Caco-2 (cell line): ENCODE measurements at regions of chrX and their contacts with region 1.

Region 1: DNA sequence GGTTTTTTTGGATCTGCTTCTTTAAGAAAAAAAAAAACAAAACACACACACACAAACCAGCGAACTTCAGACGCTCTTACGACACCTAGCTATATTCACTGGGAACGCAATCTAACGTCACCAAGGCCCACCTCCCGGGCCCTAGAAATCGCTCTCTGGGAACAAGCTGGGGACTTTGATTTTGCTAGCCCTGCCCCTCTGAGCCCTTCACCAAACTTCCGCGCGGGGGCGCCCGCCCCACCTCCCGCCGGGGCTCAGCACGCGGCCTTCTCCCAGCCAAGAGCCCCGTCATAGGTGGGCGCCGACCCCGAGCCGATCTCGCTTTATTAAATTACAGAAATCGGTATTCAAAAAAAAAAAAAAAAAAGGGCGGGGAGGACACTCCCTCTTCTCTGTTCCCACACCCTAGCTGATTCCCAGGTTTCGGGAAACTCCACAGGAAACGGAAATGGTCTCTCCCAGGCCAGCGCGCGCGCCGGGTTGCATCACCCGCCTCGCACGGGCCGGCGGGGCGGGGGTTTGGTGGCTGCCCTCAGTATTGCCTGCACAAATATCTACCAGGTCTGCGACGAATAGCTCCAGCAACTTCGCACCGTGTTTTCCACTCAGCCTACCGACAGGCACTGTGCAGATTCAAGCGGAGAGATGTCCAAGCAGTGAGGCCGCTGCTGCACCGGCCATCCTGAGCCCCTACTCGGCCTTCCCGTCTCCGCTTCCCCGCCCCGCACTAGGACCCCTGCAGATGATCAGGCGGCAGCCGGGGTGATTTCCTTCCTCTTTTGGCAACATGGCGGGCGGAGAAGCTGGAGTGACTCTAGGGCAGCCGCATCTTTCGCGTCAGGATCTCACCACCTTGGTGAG is at the start of gene EIF2S3:
- DNase-seq: peak; percentile 89 to 91
- H3K4me3 ChIP-seq: peak within 1 kb of the TSS; percentile 28
- H3K4me3 Mint-ChIP-seq: no peak within 1 kb of the TSS
- H3K27ac Mint-ChIP-seq: no peak within 1 kb of the TSS
- H3K4me1 ChIP-seq: no peaks in the 10 kb centered on the region
- H3K4me1 Mint-ChIP-seq: no peaks in the 10 kb centered on the region
- H3K27me3 ChIP-seq: no peaks in the 10 kb centered on the region
- H3K27me3 Mint-ChIP-seq: no peaks in the 10 kb centered on the region
- CTCF ChIP-seq: peak; percentile 58 to 73
- total RNA-seq, gene EIF2S3: 240 and 270 TPM in 2 replicates

Region 2: GRCh38 chrX:24014388-24015018 is 39.9 kb before region 1 on chrX:
- CTCF ChIA-PET with region 1: no interaction called
- POLR2A ChIA-PET with region 1: no interaction called
- intact Hi-C with region 1: no loop called
- DNase-seq: no peak
- H3K4me3 ChIP-seq: no peak overlapping the region
- H3K4me3 Mint-ChIP-seq: no peak overlapping the region
- H3K27ac Mint-ChIP-seq: no peak overlapping the region
- H3K4me1 ChIP-seq: no peaks in the 10 kb centered on the region
- H3K4me1 Mint-ChIP-seq: no peaks in the 10 kb centered on the region
- H3K27me3 ChIP-seq: no peaks in the 10 kb centered on the region
- H3K27me3 Mint-ChIP-seq: no peaks in the 10 kb centered on the region
- CTCF ChIP-seq: no peak

Region 3: DNA sequence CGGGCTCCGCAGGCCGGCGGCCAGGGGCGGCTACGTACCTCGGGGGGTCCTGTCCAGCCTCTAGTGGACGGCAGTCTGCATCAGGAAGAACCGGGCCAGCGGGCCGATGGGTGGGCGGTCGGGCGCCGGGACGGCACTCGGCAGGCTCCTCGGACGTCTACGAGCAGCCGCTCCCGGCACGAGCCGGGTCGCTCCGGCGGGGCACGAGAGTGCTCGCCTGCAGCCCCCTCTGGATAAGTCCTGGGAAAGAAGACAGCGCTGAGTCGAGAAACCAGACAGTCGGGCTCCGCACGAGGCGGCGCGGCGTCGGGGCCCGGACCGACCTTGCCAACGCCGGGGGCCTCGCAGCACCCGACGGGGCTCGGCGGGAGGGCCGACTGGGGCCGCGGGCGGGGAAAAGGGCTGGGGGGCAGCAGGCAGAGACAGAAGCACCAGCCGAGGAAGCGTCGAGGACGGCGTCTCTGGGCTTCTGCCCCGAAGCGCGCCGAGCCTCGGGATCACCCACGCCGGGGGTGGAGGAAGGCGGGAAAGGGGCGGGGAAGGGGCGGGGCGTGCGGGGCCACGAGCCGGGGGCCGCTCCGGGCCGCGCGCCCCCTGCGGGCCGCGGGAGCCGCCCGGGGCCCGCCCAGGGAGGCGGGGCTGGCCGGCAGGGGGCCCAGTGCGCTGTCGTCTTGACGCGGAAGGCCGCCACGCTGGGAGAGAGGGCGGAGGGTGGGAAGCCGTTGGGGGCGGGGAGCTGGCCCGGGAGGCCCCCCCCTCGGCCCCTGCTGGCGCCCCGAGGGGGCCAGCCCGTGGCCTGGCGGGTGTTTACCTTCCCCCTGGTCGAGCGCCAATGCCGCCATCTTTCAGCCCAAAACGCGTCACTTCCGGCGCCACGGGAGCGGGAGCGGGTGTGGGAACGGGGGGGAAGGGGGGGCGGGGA is 29.3 kb before region 1 on chrX:
- CTCF ChIA-PET with region 1: interaction called, 31 read pairs
- POLR2A ChIA-PET with region 1: interaction called, 6 read pairs
- intact Hi-C with region 1: loop called (anchors 1 kb)
- DNase-seq: peak; percentile 90
- H3K4me3 ChIP-seq: peak overlapping the region; percentile 90
- H3K4me3 Mint-ChIP-seq: peak overlapping the region; percentile 80
- H3K27ac Mint-ChIP-seq: peak overlapping the region; percentile 93
- H3K4me1 ChIP-seq: no peaks in the 10 kb centered on the region
- H3K4me1 Mint-ChIP-seq: no peaks in the 10 kb centered on the region
- H3K27me3 ChIP-seq: no peaks in the 10 kb centered on the region
- H3K27me3 Mint-ChIP-seq: no peaks in the 10 kb centered on the region
- CTCF ChIP-seq: no peak

Region 4: DNA sequence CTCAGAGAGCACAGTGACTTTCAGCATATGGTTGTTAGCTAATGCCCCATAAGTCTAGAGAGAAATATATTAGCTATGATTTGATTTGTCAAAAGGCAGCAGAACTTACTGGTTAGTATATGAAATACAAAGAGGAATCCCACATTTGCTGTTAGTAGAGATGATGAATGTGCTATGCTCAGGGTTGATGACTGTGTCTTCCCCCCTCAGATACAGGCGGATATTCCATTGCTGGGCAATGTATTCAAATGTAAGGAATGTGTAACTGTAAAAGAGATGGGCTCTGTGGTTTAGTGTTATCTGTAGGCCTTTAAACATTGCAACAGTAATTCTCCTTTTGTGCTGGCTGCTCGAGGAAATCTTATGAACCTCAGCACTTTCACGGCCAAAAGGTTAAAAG is 1490.2 kb after region 1 on chrX:
- CTCF ChIA-PET with region 1: no interaction called
- POLR2A ChIA-PET with region 1: no interaction called
- intact Hi-C with region 1: no loop called
- DNase-seq: no peak
- H3K4me3 ChIP-seq: no peak overlapping the region
- H3K4me3 Mint-ChIP-seq: no peak overlapping the region
- H3K27ac Mint-ChIP-seq: no peak overlapping the region
- H3K4me1 ChIP-seq: no peaks in the 10 kb centered on the region
- H3K4me1 Mint-ChIP-seq: no peaks in the 10 kb centered on the region
- H3K27me3 ChIP-seq: no peaks in the 10 kb centered on the region
- H3K27me3 Mint-ChIP-seq: peaks cover 3% of the 10 kb centered on the region
- CTCF ChIP-seq: no peak